ENCODE measurements at regions of chr13 and their contacts with region 1.

Region 1: DNA sequence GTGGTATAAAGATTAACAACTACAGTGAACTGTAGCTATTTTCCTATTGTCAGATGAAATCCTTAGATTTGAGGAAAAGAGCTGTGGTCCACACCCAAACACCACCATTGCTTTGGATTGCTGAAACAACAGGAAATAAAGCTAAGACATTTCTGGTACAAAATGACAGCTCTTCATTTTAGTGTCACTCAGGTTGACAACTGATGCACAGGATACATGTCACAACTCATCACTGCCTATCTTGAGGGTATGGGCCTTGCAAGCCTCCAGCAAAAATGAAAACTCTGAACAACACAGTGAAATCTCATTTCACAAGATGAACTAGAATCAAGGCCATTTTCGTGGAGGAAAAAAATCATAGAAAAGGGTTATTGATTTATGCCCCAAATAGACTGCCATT is 339.7 kb downstream of the ITGBL1 start:
- DNase-seq: no peak

Region 2: DNA sequence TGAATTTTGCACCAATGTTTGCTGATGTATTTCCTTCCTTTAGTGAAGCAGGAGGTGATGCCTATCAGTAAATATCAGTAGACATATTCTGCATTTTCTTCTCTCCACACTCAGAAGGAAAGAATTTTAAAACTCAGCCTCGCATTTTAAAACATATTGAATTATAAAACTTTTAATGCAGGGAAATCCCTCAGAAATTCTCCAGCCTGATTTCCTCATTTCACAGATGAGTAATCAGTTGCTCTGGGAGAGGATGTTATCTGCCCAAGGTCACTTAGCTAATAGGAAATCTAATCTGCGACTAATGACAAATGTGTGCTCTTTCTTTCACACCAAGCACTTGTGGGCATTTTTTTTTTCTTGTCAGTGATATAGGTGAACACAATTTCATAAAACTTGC is 19.1 kb before region 1 on chr13:
- intact Hi-C with region 1: no loop called
- DNase-seq: no peak

Region 3: DNA sequence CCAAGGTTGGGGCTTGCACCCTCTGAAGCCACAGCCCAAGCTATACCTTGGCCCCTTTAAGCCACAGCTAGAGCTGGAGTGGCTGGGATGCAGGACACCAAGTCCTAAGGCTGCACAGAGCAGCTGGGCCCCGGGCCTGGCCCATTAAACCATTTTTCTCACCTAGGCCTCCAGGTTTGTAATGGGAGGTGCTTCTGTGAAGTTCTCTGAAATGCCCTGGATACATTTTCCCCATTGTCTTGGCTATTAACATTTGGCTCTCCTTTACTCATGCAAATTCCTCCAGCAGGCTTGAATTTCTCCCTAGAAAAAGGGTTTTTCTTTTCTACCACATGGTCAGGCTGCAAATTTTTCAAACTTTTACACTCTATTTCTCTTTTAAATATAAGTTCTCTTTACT is 703.5 kb after region 1 on chr13:
- intact Hi-C with region 1: loop called in 1 of 2 experiments (anchors 5 kb)
- DNase-seq: no peak

Measured in posterior vena cava (tissue), 2 donors.